A673 (cell line): ENCODE measurements at regions of chr5 and their contacts with region 1.

Region 1: DNA sequence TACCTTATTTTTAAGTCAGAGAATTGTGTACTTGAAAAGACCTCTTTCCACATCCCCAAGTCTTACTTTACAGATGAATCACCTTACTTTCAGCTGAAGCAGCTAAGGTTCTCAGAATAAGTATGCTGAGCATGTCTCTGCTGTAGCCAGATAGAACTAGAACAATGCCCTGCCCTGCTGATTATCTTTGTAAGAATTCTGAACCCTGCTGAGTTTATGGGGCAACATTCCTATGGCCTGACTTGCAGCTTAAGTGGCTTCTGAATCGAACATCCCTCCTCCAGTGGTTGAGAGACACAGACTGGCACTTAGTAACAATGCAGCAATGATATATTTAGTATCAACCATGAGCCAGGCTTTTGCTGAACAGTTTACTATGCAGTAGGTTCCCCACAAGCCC is 592.0 kb upstream of the WWC1 start:
- DNase-seq: peak; percentile 97
- H3K4me3 ChIP-seq: no peak overlapping the region
- H3K27ac ChIP-seq: peak overlapping the region; percentile 69
- H3K4me1 ChIP-seq: peaks cover 61% of the 10 kb centered on the region
- H3K27me3 ChIP-seq: no peaks in the 10 kb centered on the region
- CTCF ChIP-seq: no peak

Region 2: GRCh38 chr5:167587772-167588437 is 111.5 kb before region 1 on chr5:
- CTCF ChIA-PET with region 1: no interaction called
- POLR2A ChIA-PET with region 1: no interaction called
- intact Hi-C with region 1: loop called (anchors 5 kb)
- DNase-seq: peak; percentile 71
- H3K4me3 ChIP-seq: no peak overlapping the region
- H3K27ac ChIP-seq: peak overlapping the region; percentile 2
- H3K4me1 ChIP-seq: peaks cover 32% of the 10 kb centered on the region
- H3K27me3 ChIP-seq: no peaks in the 10 kb centered on the region
- CTCF ChIP-seq: peak; percentile 53

Region 3: GRCh38 chr5:167754501-167755021 is 55.1 kb after region 1 on chr5:
- CTCF ChIA-PET with region 1: no interaction called
- POLR2A ChIA-PET with region 1: no interaction called
- intact Hi-C with region 1: loop called (anchors 5 kb)
- DNase-seq: peak; percentile 93
- H3K4me3 ChIP-seq: peak overlapping the region; percentile 40
- H3K27ac ChIP-seq: peak overlapping the region; percentile 75
- H3K4me1 ChIP-seq: peaks cover 54% of the 10 kb centered on the region
- H3K27me3 ChIP-seq: no peaks in the 10 kb centered on the region
- CTCF ChIP-seq: no peak

Region 4: DNA sequence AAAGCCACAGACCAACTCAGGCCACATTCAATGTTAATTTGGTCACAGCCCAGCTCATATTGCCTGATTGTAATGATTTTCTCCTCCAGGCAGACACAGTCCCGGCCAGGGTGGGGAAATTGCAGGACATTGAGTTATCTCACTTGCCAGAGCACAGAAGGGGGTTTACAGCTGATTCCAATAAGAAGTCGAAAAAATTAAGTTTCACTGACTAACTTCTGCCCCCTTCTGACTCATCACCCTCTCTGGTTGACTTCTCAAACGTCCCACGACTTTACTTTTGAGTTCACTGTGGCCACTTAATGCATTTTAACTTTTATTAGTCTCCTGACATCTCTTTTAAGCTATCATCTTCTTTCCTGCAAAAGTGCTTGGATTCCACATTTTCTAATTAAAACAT is 270.6 kb after region 1 on chr5:
- CTCF ChIA-PET with region 1: no interaction called
- POLR2A ChIA-PET with region 1: no interaction called
- intact Hi-C with region 1: loop called (anchors 5 kb)
- DNase-seq: peak; percentile 66
- H3K4me3 ChIP-seq: peak overlapping the region; percentile 0
- H3K27ac ChIP-seq: peak overlapping the region; percentile 70
- H3K4me1 ChIP-seq: peaks cover 81% of the 10 kb centered on the region
- H3K27me3 ChIP-seq: no peaks in the 10 kb centered on the region
- CTCF ChIP-seq: peak; percentile 46; the same call in 1 of the 2 replicates

Region 5: GRCh38 chr5:168219515-168220410 is 520.3 kb after region 1 on chr5:
- CTCF ChIA-PET with region 1: no interaction called
- POLR2A ChIA-PET with region 1: interaction called, 10 read pairs
- intact Hi-C with region 1: loop called (anchors 10 kb)
- DNase-seq: peak; percentile 83
- H3K4me3 ChIP-seq: no peak overlapping the region
- H3K27ac ChIP-seq: peak overlapping the region; percentile 44
- H3K4me1 ChIP-seq: peaks cover 47% of the 10 kb centered on the region
- H3K27me3 ChIP-seq: no peaks in the 10 kb centered on the region
- CTCF ChIP-seq: peak; percentile 78